Astrocyte of the cerebellum (primary cell): ENCODE measurements at regions of chr6 and their contacts with region 1.

Region 1: GRCh38 chr6:125480571-125480970 is 178.8 kb upstream of the HDDC2 start:
- DNase-seq: no peak
- H3K4me3 ChIP-seq: no peak overlapping the region
- CTCF ChIP-seq: no peak

Region 2: GRCh38 chr6:125444006-125444923 is 36.3 kb before region 1 on chr6:
- in situ Hi-C with region 1: loop called (anchors 5 kb)
- DNase-seq: no peak
- H3K4me3 ChIP-seq: no peak overlapping the region
- CTCF ChIP-seq: no peak